ENCODE measurements at regions of chr5 and their contacts with region 1.

Region 1: DNA sequence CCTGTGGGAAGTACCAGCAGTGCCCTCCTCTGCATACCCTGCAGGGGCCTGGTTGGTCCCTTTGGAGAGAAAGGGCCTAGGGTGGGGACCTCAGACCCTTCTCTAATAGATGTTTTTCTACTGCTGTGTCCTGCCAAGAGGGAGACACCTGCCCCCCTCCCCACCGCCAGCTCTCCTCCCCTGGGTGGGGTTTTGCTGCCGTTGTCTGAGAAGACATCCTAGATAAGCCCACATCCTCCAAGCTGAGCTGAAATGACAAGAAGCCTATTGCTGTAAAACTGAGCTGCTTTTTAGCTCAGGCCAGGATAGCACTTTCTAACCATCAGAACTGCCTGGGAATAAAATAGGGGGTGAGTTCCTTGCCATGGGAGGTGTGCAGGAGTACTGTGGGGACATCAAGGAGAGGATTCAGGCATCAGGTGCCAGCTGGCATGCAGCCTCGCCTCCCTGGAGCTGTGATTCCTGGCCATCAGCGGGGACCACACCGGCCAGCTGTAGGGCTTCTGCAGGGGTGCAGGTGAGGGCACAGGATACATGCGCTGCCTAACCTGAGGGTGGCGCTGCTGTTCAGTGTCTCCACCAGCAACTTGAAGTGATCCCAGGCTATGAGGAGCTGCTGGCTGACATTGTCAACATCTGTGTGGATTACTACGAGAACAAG is 37.9 kb downstream of the CYFIP2 start:
- DNase-seq: peak; percentile 38 to 79 (median 67)
- ATAC-seq: peak; percentile 80
- H3K4me3 ChIP-seq: peak overlapping the region; percentile 50
- H3K4me3 Mint-ChIP-seq: peak overlapping the region; percentile 71 to 89 (median 82)
- H3K27ac ChIP-seq: peak overlapping the region; percentile 62
- H3K27ac Mint-ChIP-seq: peak overlapping the region; percentile 83 to 97 (median 94)
- H3K4me1 ChIP-seq: peaks cover 51 to 56% of the 10 kb centered on the region in 2 donors
- H3K4me1 Mint-ChIP-seq: peaks cover 48 to 74% (median 65%) of the 10 kb centered on the region in 7 donors
- H3K27me3 ChIP-seq: no peaks in the 10 kb centered on the region
- H3K27me3 Mint-ChIP-seq: no peaks in the 10 kb centered on the region

Region 2: DNA sequence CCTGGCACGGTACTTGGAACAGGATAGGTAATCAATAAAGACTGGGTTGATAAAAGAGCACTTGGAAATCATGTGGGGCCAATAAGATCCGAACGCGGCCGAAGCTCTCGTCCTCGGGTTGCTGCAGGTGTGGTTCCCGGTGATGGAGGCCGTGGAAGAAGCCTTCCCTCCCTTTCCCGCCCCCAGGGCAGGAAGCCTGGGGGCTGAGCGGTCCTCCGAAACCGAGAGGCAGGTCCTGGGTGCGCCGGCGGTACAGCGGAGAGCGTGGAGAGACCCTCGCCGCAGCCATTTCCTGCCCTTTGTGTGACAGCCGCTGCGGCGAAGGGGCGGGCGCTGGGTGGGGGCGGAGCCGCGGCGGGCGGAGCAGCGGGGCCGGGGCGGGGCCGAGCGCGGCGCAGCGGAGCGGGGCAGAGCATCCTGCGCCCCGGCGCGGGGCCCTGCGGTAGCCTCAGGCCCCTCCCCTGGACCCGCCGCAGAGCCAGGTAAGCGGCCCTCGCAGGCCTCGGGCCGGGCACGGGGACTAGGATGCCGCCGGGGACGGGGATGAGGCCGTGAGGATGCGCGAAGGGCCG is 38.0 kb before region 1 on chr5 and contains the start of gene CYFIP2:
- CTCF ChIA-PET with region 1: interaction called, 8 read pairs
- POLR2A ChIA-PET with region 1: interaction called, 59 read pairs
- intact Hi-C with region 1: loop called in 1 of 2 experiments (anchors 1 kb)
- DNase-seq: peak; percentile 68 to 85 (median 84)
- ATAC-seq: peak; percentile 94
- H3K4me3 ChIP-seq: peak within 1 kb of the TSS; percentile 83
- H3K4me3 Mint-ChIP-seq: peak within 1 kb of the TSS; percentile 95 to 99 (median 97)
- H3K27ac ChIP-seq: peak within 1 kb of the TSS; percentile 84
- H3K27ac Mint-ChIP-seq: peak within 1 kb of the TSS; percentile 95 to 99 (median 98)
- H3K4me1 ChIP-seq: peaks cover 41 to 57% of the 10 kb centered on the region in 2 donors
- H3K4me1 Mint-ChIP-seq: peaks cover 51 to 76% (median 72%) of the 10 kb centered on the region in 7 donors
- H3K27me3 ChIP-seq: no peaks in the 10 kb centered on the region
- H3K27me3 Mint-ChIP-seq: no peaks in the 10 kb centered on the region
- total RNA-seq, gene CYFIP2: 386 to 449 (median 401) TPM

Region 3: GRCh38 chr5:157283434-157283833 is 20.4 kb before region 1 on chr5:
- CTCF ChIA-PET with region 1: interaction called, 10 read pairs
- POLR2A ChIA-PET with region 1: interaction called, 15 read pairs
- intact Hi-C with region 1: loop called (anchors 2 kb)
- DNase-seq: peak in 4 of 9 donors; percentile 21 to 45 (median 36)
- ATAC-seq: peak; percentile 91
- H3K4me3 ChIP-seq: no peak overlapping the region
- H3K4me3 Mint-ChIP-seq: peak overlapping the region; percentile 6 to 75 (median 60)
- H3K27ac ChIP-seq: peak overlapping the region; percentile 37
- H3K27ac Mint-ChIP-seq: peak overlapping the region; percentile 60 to 98 (median 84)
- H3K4me1 ChIP-seq: peaks cover 47 to 79% of the 10 kb centered on the region in 2 donors
- H3K4me1 Mint-ChIP-seq: peaks cover 62 to 93% (median 90%) of the 10 kb centered on the region in 7 donors
- H3K27me3 ChIP-seq: no peaks in the 10 kb centered on the region
- H3K27me3 Mint-ChIP-seq: no peaks in the 10 kb centered on the region

Region 4: GRCh38 chr5:157290981-157291711 is 12.7 kb before region 1 on chr5:
- CTCF ChIA-PET with region 1: interaction called, 10 read pairs
- POLR2A ChIA-PET with region 1: interaction called, 15 read pairs
- intact Hi-C with region 1: loop called in 1 of 2 experiments (anchors 1 kb)
- DNase-seq: no peak
- ATAC-seq: peak; percentile 68
- H3K4me3 ChIP-seq: no peak overlapping the region
- H3K4me3 Mint-ChIP-seq: peak overlapping the region in 2 of 10 donors; percentile 13 to 67
- H3K27ac ChIP-seq: peak overlapping the region; percentile 42
- H3K27ac Mint-ChIP-seq: peak overlapping the region; percentile 63 to 95 (median 89)
- H3K4me1 ChIP-seq: peaks cover 0 to 54% of the 10 kb centered on the region in 2 donors
- H3K4me1 Mint-ChIP-seq: peaks cover 38 to 93% (median 66%) of the 10 kb centered on the region in 7 donors
- H3K27me3 ChIP-seq: no peaks in the 10 kb centered on the region
- H3K27me3 Mint-ChIP-seq: no peaks in the 10 kb centered on the region

Region 5: GRCh38 chr5:157731272-157732129 is 427.7 kb after region 1 on chr5 and contains the start of gene THG1L:
- CTCF ChIA-PET with region 1: no interaction called
- POLR2A ChIA-PET with region 1: no interaction called
- intact Hi-C with region 1: no loop called
- DNase-seq: peak; percentile 94 to 98 (median 96)
- ATAC-seq: peak; percentile 98
- H3K4me3 ChIP-seq: peak within 1 kb of the TSS; percentile 73
- H3K4me3 Mint-ChIP-seq: peak within 1 kb of the TSS; percentile 87 to 99 (median 97)
- H3K27ac ChIP-seq: peak within 1 kb of the TSS; percentile 73
- H3K27ac Mint-ChIP-seq: peak within 1 kb of the TSS; percentile 80 to 98 (median 93)
- H3K4me1 ChIP-seq: peaks cover 3 to 7% of the 10 kb centered on the region in 2 donors
- H3K4me1 Mint-ChIP-seq: peaks cover 9 to 26% (median 23%) of the 10 kb centered on the region in 7 donors
- H3K27me3 ChIP-seq: no peaks in the 10 kb centered on the region
- H3K27me3 Mint-ChIP-seq: no peaks in the 10 kb centered on the region
- total RNA-seq, gene THG1L: 6.2 to 17.4 (median 7.4) TPM